ENCODE measurements at regions of chr6 and their contacts with region 1.

Region 1: GRCh38 chr6:26270903-26271667 is 93.9 kb upstream of the BTN3A2 start:
- DNase-seq: peak; percentile 87
- H3K4me3 Mint-ChIP-seq: no peak overlapping the region
- H3K27ac Mint-ChIP-seq: no peak overlapping the region
- H3K4me1 Mint-ChIP-seq: peaks cover 35% of the 10 kb centered on the region
- H3K27me3 Mint-ChIP-seq: no peaks in the 10 kb centered on the region

Region 2: DNA sequence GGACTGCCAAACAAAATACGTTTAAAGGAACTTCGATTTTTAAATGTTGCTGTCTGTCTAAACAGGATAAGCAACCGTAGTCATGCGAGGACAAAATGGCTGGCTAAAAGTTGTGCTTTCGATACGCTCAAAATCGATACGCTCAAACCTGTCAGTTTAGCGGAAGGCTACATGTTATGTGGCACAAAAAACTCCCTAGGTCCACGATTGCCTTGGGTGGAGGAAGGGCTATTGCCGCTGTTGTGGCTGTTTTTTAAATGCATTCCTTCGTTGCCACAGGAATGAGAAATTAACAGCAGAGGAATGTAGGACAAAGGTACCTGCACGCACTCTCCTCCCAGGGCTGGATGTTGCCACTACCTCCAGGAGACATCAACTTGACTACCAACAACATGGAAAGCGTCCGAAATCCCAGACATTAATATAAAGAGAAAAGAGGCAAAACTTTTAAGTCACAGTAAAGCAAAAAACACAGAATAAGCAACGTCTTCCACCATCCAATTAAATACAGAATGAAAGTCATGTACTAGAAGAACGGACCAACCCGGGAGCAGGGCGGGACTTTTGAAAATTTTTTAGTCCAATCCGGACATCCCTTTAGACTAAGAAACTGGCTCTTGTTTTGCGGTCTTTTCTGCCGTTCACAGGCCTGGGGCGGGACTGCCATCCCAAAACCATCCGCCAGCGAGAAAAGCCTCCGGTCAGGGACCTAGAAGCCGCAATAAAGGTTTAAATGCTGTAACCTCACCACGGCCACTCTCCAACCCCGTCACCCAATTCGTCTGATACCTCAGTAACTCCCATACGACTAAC is 216.0 kb before region 1 on chr6:
- CTCF ChIA-PET with region 1: no interaction called
- POLR2A ChIA-PET with region 1: interaction called, 21 read pairs
- DNase-seq: peak; percentile 92
- H3K4me3 Mint-ChIP-seq: peak overlapping the region; percentile 83
- H3K27ac Mint-ChIP-seq: peak overlapping the region; percentile 99
- H3K4me1 Mint-ChIP-seq: peaks cover 37% of the 10 kb centered on the region
- H3K27me3 Mint-ChIP-seq: no peaks in the 10 kb centered on the region

Region 3: DNA sequence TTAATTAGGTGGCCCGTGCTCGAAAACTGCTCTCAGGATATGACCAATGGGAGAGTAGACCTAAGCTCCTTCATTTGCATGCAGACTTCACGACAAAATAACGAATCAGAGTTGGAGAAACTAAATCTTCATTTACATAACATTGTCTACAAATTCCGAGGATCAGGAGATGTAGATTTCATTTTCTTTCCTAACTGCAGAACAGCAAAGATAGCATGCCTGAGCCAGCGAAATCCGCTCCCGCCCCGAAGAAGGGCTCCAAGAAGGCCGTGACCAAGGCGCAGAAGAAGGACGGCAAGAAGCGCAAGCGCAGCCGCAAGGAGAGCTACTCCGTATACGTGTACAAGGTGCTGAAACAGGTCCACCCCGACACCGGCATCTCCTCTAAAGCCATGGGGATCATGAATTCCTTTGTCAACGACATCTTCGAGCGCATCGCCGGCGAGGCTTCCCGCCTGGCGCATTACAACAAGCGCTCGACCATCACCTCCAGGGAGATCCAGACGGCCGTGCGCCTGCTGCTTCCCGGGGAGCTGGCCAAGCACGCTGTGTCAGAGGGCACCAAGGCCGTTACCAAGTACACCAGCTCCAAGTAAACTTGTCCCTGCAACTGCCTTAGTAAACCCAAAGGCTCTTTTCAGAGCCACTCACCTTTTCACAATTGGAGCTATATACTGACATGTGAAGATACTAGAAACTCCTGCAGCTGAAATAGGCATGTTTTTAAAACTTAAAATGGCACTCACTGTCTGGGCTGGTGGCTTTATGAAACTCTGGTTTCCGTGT is 87.3 kb before region 1 on chr6:
- CTCF ChIA-PET with region 1: interaction called, 5 read pairs
- POLR2A ChIA-PET with region 1: interaction called, 114 read pairs
- DNase-seq: peak; percentile 78
- H3K4me3 Mint-ChIP-seq: peak overlapping the region; percentile 75
- H3K27ac Mint-ChIP-seq: peak overlapping the region; percentile 92
- H3K4me1 Mint-ChIP-seq: peaks cover 71% of the 10 kb centered on the region
- H3K27me3 Mint-ChIP-seq: no peaks in the 10 kb centered on the region

Region 4: GRCh38 chr6:26258200-26258977 is 12.7 kb before region 1 on chr6:
- CTCF ChIA-PET with region 1: interaction called, 20 read pairs
- POLR2A ChIA-PET with region 1: no interaction called
- DNase-seq: no peak
- H3K4me3 Mint-ChIP-seq: no peak overlapping the region
- H3K27ac Mint-ChIP-seq: no peak overlapping the region
- H3K4me1 Mint-ChIP-seq: peaks cover 17% of the 10 kb centered on the region
- H3K27me3 Mint-ChIP-seq: no peaks in the 10 kb centered on the region

Region 5: DNA sequence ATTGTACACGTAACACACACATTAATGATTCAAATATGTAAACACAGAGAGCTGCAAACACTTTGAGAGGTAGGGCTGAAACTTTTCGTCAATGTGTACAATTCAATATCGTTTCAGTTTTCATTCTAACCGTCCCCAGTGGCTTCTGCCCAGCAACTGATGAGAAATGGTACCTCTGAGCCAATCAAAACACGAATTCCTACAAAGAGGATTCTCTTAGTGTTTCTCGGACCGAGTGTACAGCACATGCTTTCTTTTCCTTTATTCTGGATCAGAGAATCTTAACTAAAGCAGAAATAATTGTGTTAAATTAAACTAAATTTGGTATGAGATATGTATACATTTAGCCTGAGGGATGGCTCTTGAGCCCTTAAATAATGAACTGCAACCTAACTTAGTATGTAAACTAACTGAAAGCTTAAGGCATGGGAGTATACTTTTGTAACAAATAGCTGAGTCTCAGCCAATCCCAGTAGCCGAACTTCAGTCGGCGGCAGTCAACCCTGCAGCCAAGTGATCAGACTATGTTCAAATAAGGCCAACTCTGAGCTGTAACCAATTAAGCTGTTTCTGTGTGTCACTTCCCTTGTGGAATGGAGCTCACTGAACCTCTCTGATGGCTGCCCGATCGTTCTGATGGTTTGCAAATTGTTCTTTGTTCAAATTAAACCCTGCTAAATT is 202.8 kb after region 1 on chr6:
- CTCF ChIA-PET with region 1: no interaction called
- POLR2A ChIA-PET with region 1: interaction called, 15 read pairs
- DNase-seq: peak; percentile 86
- H3K4me3 Mint-ChIP-seq: peak overlapping the region; percentile 99
- H3K27ac Mint-ChIP-seq: peak overlapping the region; percentile 100
- H3K4me1 Mint-ChIP-seq: peaks cover 36% of the 10 kb centered on the region
- H3K27me3 Mint-ChIP-seq: no peaks in the 10 kb centered on the region

Region 6: DNA sequence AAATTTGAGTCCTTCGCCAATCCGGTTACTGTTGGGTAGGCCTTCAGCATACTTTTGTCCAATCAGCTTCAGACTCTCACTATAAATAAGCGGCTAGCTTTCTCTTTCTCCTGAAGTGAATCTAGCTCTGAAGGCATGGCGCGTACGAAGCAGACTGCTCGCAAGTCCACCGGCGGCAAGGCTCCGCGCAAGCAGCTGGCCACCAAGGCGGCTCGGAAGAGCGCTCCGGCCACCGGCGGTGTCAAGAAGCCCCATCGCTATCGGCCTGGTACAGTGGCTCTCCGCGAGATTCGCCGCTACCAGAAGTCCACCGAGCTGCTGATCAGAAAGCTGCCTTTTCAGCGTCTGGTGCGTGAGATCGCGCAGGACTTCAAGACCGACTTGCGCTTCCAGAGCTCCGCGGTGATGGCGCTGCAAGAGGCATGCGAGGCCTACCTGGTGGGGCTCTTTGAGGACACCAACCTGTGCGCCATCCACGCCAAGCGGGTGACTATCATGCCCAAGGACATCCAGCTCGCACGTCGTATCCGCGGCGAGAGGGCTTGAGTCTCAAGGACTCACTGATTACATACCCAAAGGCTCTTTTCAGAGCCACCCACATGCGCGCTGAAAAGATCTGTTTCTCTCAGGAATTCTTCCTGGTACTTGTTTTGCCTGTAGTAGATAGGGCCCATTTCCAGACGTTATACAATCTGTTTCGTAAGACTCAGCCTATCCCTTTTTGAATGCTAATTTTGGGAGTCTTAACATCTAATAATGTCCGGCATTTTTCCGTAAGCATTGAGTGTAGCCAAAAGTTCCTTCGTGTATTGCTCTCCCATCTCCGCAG is 1539.1 kb after region 1 on chr6:
- CTCF ChIA-PET with region 1: interaction called, 3 read pairs
- POLR2A ChIA-PET with region 1: interaction called, 126 read pairs
- DNase-seq: peak; percentile 83
- H3K4me3 Mint-ChIP-seq: peak overlapping the region; percentile 85
- H3K27ac Mint-ChIP-seq: peak overlapping the region; percentile 99
- H3K4me1 Mint-ChIP-seq: peaks cover 62% of the 10 kb centered on the region
- H3K27me3 Mint-ChIP-seq: no peaks in the 10 kb centered on the region

Measured in activated CD4-positive, alpha-beta memory T cell treated with anti-CD3 and anti-CD28 coated beads, Interleukin-2, amount 10 ng/mL, durations not matched to agents 7 days and 5 days (primary cell).